Right lobe of liver (tissue), 6 donors: ENCODE measurements at regions of chr7 and their contacts with region 1.

Region 1: DNA sequence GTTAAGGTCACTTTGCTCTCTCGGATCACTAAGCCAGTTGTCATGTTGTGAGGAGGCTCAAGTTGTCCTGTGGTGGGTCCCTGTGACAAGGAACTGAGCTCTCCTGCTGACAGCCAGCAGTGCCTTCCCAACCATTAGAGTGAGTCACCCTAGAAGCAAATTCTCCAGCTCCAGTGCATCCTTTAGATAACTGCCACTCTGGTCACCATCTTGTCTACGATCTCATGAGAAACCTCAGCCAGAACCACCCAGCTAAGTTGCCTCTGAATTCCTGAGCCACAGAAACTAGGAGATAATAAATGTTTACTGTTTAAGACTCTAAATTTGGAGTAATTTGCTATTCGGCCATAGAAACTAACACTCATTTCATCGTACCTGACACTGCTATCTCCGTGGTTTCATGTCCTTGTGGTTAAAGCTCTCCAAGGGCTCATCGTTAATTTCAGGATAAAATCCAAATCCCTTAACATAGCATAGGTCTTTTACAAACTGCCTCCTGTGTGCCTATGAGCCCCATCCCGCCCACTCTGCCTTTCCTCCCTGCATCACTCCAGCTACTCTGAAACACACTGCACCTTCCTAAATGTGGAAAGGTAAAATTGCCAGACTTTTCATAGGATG is 56.5 kb upstream of the WIPF3 start:
- DNase-seq: no peak
- ATAC-seq: no peak
- H3K4me3 ChIP-seq: no peak overlapping the region
- H3K27ac ChIP-seq: no peak overlapping the region
- H3K4me1 ChIP-seq: peaks cover 0 to 11% (median 3%) of the 10 kb centered on the region in 4 donors
- H3K27me3 ChIP-seq: no peaks in the 10 kb centered on the region
- CTCF ChIP-seq: no peak
- POLR2A ChIP-seq: no peak

Region 2: DNA sequence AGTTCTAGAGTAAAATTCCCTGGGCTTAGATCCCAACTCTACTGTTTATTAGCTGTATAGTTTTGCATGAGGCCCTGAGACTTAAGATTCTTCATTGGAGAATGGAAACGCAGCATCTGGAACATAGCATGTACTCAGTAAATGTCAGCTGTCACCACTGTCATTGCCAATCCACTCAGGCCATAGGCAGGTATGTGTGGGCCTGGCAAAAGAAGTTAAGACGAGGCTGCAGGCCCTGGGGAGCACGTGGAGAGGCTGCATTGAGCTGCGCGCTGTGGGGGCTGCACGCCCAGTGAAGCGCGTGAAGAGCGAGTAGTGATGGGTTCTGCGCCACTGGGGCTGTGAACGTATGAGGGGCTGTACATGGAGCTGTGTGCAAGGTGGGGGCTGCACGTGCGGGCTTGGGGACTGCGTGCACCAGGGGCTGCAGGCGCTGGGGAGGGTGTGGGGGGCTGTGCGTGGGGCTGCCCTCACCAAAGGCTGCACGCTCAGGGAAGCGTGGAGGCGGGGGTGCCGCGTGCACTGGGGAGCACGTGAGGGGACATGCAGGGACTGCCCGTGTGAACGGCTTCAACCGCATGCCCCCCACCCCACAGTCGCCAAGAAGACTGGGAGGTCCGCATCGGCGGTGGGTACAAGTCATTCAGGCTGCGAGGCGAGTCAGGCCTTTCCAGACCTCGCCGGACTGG is 100.6 kb before region 1 on chr7:
- intact Hi-C with region 1: no loop called
- DNase-seq: no peak
- ATAC-seq: peak in 1 of 4 donors; percentile 20
- H3K4me3 ChIP-seq: no peak overlapping the region
- H3K27ac ChIP-seq: no peak overlapping the region
- H3K4me1 ChIP-seq: no peaks in the 10 kb centered on the region
- H3K27me3 ChIP-seq: no peaks in the 10 kb centered on the region
- CTCF ChIP-seq: no peak
- POLR2A ChIP-seq: no peak

Region 3: DNA sequence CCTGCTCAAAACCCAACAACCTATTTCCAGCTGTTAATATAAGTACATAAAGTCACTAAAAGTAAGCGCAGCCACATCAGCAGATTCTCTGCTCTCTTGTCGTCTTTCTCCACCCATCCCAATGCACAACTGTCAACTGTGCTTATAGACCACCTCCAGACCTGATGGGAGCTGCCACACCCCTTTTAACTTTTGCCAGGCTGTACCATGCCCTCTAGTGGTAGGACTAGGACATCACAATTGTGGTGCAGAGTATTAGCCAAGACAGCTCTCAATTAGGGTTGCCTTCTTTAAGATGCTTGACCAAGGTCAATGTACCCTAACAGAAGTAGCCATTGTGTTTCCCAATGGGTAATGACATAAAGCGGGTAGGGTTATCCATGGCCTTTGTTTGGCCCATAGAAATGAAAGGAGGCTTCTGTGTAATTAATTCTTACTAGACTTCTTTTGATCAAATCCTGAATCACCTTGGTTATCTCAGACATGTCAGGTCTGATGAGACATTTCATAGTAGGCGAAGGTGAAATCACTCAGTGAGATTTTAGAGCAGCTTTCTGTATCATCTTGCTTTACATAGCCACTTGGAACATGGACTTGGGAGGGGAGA is 171.7 kb after region 1 on chr7:
- intact Hi-C with region 1: loop called in 1 of 2 experiments (anchors 10 kb)
- DNase-seq: peak in 1 of 3 donors; percentile 51
- ATAC-seq: peak; percentile 87 to 95 (median 90)
- H3K4me3 ChIP-seq: no peak overlapping the region
- H3K27ac ChIP-seq: no peak overlapping the region
- H3K4me1 ChIP-seq: peaks cover 0 to 1% (median 0%) of the 10 kb centered on the region in 4 donors
- H3K27me3 ChIP-seq: no peaks in the 10 kb centered on the region
- CTCF ChIP-seq: peak; percentile 87 to 93 (median 90)
- POLR2A ChIP-seq: no peak